WTC11 (cell line): ENCODE measurements at regions of chr12 and their contacts with region 1.

Region 1: GRCh38 chr12:83823431-83823963 is 1089.1 kb downstream of the SLC6A15 start:
- DNase-seq: peak; percentile 89
- ATAC-seq: peak; percentile 84
- H3K4me3 Mint-ChIP-seq: no peak overlapping the region
- H3K27ac Mint-ChIP-seq: no peak overlapping the region
- H3K4me1 Mint-ChIP-seq: peaks cover 15% of the 10 kb centered on the region
- H3K27me3 Mint-ChIP-seq: no peaks in the 10 kb centered on the region; the same call in 1 of the 2 replicates
- CTCF ChIP-seq: peak; percentile 73; the same call in 1 of the 2 replicates

Region 2: DNA sequence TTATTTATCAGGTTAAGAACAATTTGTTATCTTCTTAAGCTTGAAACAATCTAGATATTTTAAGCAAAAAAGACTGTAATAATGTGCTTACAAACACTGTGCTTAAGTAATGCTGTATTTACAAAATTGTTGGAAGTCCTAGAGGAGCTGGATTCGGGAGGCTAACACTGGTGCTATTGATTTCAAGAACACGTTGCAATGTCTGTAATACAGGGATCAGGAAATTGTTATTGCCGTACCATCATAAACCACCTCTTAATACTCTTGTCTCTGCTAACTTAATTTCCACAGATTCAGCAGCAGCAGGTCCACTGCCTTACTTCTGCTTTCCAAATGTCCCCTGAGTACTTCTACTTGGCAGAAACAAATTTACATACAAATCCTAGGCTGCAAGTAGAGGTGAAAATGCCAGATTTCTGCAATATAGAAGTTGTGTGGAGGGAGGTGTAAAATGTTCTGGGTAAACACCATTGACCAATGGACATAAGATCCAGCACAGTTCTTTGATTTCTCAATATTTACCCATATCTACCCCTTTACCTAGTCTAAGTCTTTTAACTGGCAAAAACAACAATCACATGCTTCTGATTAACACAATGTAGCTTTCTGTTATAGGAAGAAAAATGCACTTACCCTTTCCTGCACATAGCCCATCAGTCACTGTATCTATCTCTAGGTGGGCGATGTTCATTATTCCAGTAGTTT is 473.4 kb before region 1 on chr12:
- CTCF ChIA-PET with region 1: no interaction called
- POLR2A ChIA-PET with region 1: no interaction called
- DNase-seq: no peak
- ATAC-seq: no peak
- H3K4me3 Mint-ChIP-seq: no peak overlapping the region
- H3K27ac Mint-ChIP-seq: no peak overlapping the region
- H3K4me1 Mint-ChIP-seq: no peaks in the 10 kb centered on the region
- H3K27me3 Mint-ChIP-seq: no peaks in the 10 kb centered on the region
- CTCF ChIP-seq: no peak

Region 3: DNA sequence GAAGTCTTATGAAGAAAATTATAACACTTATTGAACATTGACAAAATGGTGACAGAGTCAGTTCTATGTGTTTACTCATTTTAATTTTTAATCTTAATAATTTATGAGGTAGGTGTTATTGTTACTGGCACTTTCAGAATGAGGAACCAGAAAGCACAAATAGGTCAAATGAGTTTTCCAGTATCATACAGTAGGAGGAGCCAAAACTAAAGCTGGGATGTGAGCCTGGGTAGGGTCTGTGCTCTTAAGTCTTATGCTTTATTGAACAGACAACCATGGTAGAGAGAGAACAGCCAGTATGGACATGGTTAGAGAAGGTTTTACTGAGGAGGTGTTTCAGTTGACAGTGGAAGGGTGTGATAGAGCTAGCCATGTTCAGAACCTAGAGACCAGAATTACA is 361.1 kb before region 1 on chr12:
- CTCF ChIA-PET with region 1: interaction called, 18 read pairs
- POLR2A ChIA-PET with region 1: no interaction called
- DNase-seq: no peak
- ATAC-seq: peak; percentile 91
- H3K4me3 Mint-ChIP-seq: no peak overlapping the region
- H3K27ac Mint-ChIP-seq: no peak overlapping the region
- H3K4me1 Mint-ChIP-seq: peaks cover 5% of the 10 kb centered on the region
- H3K27me3 Mint-ChIP-seq: no peaks in the 10 kb centered on the region; the same call in 1 of the 2 replicates
- CTCF ChIP-seq: no peak

Region 4: GRCh38 chr12:83850531-83850930 is 27.0 kb after region 1 on chr12:
- CTCF ChIA-PET with region 1: no interaction called
- POLR2A ChIA-PET with region 1: no interaction called
- DNase-seq: no peak
- ATAC-seq: no peak
- H3K4me3 Mint-ChIP-seq: no peak overlapping the region
- H3K27ac Mint-ChIP-seq: no peak overlapping the region
- H3K4me1 Mint-ChIP-seq: peaks cover 6% of the 10 kb centered on the region
- H3K27me3 Mint-ChIP-seq: no peaks in the 10 kb centered on the region
- CTCF ChIP-seq: no peak

Region 5: DNA sequence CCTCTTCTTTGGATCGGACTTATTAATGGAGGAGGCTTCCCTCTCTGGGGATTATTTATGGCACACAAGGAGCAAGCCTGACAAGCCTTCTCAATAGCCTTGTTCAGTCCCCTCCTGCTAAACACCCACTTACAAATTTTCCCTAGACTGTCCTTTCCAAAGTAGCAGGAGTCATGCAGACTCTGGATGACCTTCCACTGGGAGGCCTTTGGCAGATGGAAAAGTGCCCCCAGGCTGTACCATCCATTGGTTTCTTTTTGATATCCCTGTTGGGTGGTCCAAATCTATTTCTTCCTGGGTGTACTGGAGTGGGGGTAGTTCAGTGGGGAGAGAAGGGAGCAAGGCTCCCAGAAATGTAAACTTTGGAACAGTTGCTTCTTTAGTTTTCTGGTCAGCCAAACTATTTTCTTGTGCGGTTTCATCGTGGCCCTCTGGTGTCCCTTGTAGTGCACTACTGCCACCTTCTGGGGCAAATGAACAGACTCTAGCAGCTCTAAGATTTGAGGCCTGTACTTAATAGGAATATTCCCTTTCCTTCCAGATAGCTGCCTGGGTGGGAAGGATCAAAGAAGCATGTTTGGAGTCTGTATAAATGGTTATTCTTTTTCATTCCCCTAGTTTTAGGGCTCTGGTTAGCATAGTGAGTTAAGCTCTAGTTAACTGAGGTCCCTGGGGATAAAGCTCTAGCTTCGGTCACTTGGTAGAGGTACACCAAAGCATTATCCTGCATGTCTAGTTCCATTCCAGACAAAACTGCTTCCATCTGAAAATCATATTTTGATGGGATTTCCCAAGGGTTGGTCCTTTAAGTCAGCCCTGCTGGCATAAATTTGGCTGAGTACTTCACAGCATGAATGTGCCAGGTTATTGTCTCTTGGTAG is 679.6 kb after region 1 on chr12:
- CTCF ChIA-PET with region 1: interaction called, 17 read pairs
- POLR2A ChIA-PET with region 1: no interaction called
- DNase-seq: peak; percentile 71
- ATAC-seq: peak; percentile 95
- H3K4me3 Mint-ChIP-seq: no peak overlapping the region
- H3K27ac Mint-ChIP-seq: no peak overlapping the region
- H3K4me1 Mint-ChIP-seq: peaks cover 4% of the 10 kb centered on the region
- H3K27me3 Mint-ChIP-seq: no peaks in the 10 kb centered on the region
- CTCF ChIP-seq: peak; percentile 57